Lower leg skin (tissue), 4 donors: ENCODE measurements at regions of chr7 and their contacts with region 1.

Region 1: DNA sequence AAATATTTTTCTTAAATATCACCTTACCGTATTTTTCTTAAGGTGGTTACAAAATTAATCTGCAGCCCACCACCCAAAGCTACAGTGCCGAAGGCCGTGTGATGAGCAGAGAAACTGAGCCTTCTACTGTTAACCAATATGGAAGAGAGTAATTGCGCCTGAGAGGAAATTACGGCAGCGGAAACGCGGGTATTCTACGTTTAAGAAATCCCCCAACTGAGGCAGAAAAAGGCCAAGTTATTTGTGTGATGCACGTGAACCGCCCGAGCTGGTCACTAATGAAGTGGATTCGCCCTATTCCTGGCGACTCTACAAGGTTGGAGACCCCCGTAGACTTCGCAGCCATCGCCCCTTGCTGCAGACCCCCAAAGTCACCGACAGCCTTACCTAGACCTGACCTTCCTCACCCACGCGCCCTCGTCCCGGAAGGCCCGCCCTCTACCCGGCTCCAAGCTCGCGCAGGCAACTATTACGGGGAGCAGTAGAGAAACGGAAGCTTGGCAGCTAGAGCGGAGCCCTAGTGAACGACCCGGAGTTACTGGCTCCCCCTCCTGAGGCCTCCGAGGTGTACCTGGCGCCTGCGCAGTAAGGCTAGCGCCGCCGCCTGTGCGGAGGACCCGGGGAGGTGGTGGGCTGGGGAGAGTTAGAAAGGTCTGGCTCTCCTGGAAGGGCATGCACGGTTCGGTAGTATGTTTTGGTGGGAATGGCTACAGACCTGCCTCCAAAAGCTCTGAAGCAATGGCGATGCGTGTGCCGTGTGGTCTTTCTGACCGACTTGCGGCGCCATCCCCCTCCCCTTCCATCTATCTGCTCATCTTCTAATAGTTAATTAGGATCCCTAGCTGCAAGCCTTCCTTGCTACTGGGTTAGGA is at the start of gene MRPS33:
- DNase-seq: peak; percentile 94 to 98
- H3K4me3 ChIP-seq: peak within 1 kb of the TSS; percentile 48
- CTCF ChIP-seq: no peak
- POLR2A ChIP-seq: no peak
- total RNA-seq, gene MRPS33: 10.1 to 24.1 (median 19.7) TPM

Region 2: DNA sequence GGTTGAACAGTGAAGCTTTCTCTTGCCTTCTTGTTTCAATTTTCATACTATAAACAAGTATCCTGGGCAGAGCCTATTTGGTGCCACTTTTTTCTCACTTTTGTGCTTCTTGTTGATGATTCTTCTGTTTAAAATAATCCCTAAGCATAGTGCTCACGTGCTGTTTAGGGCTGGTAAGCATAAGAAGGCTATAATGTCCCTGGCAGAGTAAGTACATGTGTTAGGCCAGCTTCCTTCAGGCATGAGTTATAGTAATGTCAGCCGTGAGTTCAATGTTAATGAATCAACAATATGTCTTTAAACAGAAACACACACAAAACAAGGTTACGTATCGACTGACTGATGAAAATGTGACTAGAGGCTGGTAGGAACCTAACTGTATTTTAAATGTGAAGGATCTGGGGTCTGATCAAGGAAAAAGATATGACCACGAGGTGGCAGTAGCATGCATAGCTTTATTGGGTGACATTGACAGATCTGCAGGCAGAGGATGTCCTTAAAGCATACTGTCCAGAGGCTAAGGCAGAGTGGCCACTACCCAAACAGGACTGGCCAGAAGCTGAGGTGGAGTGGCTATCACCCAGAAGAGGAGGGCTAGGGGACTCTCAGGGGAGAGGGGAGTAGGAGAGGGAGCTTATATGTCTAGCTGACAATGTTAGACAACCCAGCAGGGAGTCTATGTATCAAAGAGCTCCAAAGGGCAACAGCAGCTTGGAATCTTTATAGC is 203.8 kb before region 1 on chr7:
- intact Hi-C with region 1: loop called (anchors 2 kb)
- DNase-seq: peak in 1 of 2 donors; percentile 64
- H3K4me3 ChIP-seq: no peak overlapping the region
- CTCF ChIP-seq: peak in 1 of 3 donors; percentile 44
- POLR2A ChIP-seq: no peak

Region 3: DNA sequence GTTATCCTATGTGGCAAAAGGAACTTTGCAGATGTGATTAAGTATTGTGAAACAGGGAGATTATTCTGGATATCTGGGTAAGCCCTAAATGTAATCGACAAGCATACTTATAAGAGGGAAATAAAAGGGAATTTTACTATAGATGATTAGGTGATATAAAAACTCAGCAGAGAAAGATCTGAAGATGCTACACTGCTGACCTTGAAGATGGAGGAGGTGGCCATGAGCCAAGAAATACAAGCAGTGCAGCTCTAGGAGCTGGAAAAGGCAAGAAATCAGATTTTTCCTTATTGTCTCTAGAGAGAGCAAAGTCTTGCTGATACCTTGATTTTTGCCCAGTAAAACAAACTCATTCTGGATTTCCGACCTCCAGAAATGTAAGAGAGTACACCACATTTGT is 157.7 kb before region 1 on chr7:
- intact Hi-C with region 1: no loop called
- DNase-seq: no peak
- H3K4me3 ChIP-seq: no peak overlapping the region
- CTCF ChIP-seq: no peak
- POLR2A ChIP-seq: no peak

Region 4: DNA sequence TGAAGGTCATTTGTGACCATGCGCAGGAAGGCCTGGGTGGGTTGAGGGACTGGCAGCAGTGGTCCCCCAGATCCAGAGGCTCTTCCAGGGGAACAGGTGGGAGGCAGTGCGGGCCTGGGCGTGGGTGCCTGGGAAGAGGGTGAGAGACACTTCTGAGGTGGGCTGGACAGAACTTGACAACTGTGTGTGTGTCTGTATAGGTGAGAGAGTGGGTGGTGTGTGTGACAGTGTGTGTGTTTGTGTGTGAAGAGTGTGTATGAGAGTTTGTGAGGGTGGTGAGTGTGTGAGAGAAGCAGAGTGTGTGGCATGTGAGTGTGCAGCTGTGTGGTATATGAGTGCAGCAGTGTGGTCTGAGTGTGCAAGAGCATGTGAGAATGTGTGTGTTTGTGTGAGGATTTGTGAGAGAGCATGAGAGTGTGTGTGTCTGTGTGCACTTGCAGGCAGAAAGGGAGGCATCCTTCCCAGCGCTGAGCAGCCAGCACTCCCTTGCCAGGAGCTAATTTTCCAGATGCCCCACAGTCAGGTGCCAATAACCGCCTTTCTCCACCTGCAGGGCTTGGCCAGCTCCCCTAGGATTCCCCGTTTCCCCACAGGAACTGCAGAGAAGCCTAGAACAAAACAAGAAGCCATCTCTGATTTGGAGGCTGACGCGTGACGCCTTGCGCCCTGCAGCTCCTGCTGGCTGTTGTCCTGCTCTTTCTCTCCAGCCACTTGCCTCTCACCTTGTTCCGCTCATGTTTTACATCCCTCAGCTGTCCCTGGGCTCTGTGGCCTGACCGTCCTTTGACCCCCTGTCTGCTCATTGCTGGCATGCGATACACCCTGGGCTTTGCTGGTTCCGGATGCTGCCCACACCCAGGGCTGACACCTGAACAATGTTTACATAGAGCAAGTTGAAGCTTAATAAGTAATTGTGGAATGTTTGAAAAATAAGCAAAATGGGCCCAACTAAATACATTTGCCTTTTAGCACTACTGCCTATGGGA is 147.1 kb after region 1 on chr7:
- intact Hi-C with region 1: no loop called
- DNase-seq: no peak
- H3K4me3 ChIP-seq: no peak overlapping the region
- CTCF ChIP-seq: no peak
- POLR2A ChIP-seq: no peak